AG04450 (cell line): ENCODE measurements at regions of chr17 and their contacts with region 1.

Region 1: GRCh38 chr17:40803617-40804082 is 3.9 kb upstream of the KRT28 start:
- DNase-seq: peak; percentile 16
- H3K4me3 ChIP-seq: no peak overlapping the region
- H3K27ac ChIP-seq: no peak overlapping the region
- H3K27me3 ChIP-seq: peaks cover 33% of the 10 kb centered on the region
- CTCF ChIP-seq: peak; percentile 95

Region 2: GRCh38 chr17:40707720-40708119 is 95.9 kb before region 1 on chr17:
- CTCF ChIA-PET with region 1: no interaction called
- POLR2A ChIA-PET with region 1: no interaction called
- DNase-seq: no peak
- H3K4me3 ChIP-seq: no peak overlapping the region
- H3K27ac ChIP-seq: no peak overlapping the region
- H3K27me3 ChIP-seq: peaks cover 15% of the 10 kb centered on the region
- CTCF ChIP-seq: no peak

Region 3: DNA sequence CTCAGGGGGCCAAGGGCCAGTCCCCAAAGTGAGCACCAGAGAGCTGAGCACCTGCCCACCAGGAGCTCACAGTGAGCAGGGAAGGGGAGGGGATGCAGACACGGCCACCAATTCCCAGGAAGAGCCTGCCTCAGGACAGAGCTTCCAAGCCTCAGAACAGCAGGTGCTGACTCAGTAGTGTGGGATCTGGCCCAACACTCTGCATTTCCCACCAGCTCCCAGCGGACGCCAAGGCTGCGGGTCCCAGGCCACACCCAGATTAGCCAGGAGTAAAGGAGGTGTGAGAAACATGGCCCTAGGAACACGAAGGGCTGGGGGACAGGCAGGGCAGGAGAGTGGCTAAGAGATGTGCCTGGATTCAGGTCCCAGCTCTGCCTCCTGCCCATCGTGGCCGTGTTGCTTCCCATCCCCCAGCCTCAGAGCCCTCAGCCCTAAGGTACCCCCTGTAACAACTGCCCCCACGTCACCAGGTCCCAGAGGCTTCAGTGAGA is 856.6 kb after region 1 on chr17:
- CTCF ChIA-PET with region 1: interaction called, 34 read pairs
- POLR2A ChIA-PET with region 1: no interaction called
- DNase-seq: no peak
- H3K4me3 ChIP-seq: no peak overlapping the region
- H3K27ac ChIP-seq: no peak overlapping the region
- H3K27me3 ChIP-seq: peaks cover 3% of the 10 kb centered on the region
- CTCF ChIP-seq: no peak